ENCODE measurements at regions of chr2 and their contacts with region 1.

Region 1: DNA sequence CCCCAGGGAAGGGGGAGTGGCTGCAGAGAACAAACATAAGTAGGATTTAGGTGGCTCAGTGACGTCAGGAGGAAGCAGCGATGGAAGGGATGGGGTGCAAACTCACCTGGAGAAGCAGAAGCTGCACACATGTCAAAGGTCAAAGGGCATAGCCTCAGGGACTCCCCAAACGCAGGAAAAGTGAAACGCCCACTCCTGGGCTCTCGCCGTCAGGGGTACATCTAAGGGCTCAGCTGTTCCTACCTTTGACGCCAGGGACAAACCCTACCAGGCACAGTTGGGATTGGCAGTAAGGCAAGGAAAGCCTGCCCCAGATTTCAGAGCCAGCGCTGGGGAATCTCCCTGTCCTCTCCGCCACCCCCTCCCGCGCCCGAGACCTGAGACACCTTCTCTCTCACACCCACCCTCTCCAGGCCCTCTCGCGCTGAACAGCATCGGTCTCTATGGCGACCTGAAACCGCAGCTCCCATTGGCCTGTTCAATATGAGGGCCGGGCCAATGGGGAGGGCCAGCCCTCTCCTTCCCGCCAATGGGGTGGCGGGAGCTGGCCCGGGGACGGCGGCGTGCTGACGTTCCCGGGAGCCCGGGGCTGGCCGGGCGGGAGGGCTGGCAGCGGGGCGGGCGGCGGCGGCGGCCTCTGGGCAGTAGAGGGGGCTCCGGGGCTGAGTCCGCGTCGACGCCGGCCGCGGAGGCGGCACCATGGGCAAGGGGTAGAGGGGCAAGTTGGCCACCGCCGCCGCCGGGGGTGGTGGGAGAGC is at the starts of genes CCDC148 and PKP4:
- DNase-seq: peak; percentile 82 to 87
- H3K4me3 ChIP-seq: peak within 1 kb of the TSS; percentile 77 to 90 (median 80)
- H3K27ac ChIP-seq: peak within 1 kb of the TSS; percentile 81
- H3K4me1 ChIP-seq: peaks cover 0 to 6% (median 4%) of the 10 kb centered on the region in 4 experiments; a peak in 4 of 7 replicates
- H3K27me3 ChIP-seq: no peaks in the 10 kb centered on the region
- CTCF ChIP-seq: peak in 2 of 3 experiments; percentile 14 to 20; a peak in 3 of 4 replicates
- EP300 ChIP-seq: no peak
- POLR2A ChIP-seq: peak; percentile 60 to 67; a peak in 2 of 3 replicates
- RAD21 ChIP-seq: peak in 1 of 2 experiments; percentile 38; a peak in 1 of 4 replicates
- total RNA-seq, gene CCDC148: 1.3 and 1.5 TPM in 2 replicates
- total RNA-seq, gene PKP4: 83.6 and 88.0 TPM in 2 replicates

Region 2: GRCh38 chr2:158443612-158444011 is 12.9 kb before region 1 on chr2:
- CTCF ChIA-PET with region 1: interaction called, 3 read pairs
- POLR2A ChIA-PET with region 1: interaction called, 16 read pairs
- DNase-seq: no peak
- H3K4me3 ChIP-seq: no peak overlapping the region
- H3K27ac ChIP-seq: no peak overlapping the region
- H3K4me1 ChIP-seq: no peaks in the 10 kb centered on the region
- H3K27me3 ChIP-seq: no peaks in the 10 kb centered on the region
- CTCF ChIP-seq: no peak
- EP300 ChIP-seq: no peak
- POLR2A ChIP-seq: no peak
- RAD21 ChIP-seq: no peak

Region 3: DNA sequence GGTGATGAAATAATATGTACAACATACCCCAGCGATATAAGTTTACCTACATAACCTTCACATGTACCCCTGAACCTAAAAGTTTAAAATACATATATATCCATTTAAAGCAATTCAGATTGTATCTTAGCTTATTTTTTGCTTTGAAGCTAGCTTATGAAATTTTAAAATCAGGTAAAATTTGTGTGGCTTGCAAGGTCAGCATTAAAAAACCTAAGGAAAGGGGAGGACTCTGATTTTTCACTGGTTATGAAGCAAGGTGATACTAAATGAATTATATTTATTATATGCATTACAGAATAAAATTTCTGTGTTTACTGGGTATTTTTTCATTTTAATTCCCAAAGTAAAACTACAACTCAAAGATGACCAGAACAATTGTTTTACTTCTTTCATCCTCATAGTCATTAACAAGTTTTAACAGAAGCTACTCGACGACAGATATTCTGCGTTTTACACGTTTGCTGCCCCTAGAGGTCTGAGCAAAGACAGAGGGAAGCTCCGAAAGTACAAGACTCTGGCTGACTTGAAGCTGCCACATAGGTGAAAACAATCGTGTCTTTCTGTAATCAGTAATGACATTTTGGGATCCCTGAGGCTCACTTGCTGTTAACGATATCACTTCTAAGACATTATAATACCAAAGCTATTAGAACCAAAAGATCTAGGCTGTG is 17.4 kb after region 1 on chr2:
- CTCF ChIA-PET with region 1: interaction called, 58 read pairs
- POLR2A ChIA-PET with region 1: interaction called, 12 read pairs
- DNase-seq: no peak
- H3K4me3 ChIP-seq: no peak overlapping the region
- H3K27ac ChIP-seq: no peak overlapping the region
- H3K4me1 ChIP-seq: peaks cover 2 to 9% (median 6%) of the 10 kb centered on the region in 4 experiments; a peak in 3 of 7 replicates
- H3K27me3 ChIP-seq: no peaks in the 10 kb centered on the region
- CTCF ChIP-seq: peak in 2 of 3 experiments; percentile 38 to 73; a peak in 2 of 4 replicates
- EP300 ChIP-seq: no peak
- POLR2A ChIP-seq: no peak
- RAD21 ChIP-seq: peak; percentile 34 to 48

Region 4: GRCh38 chr2:158489366-158490112 is 33.1 kb after region 1 on chr2:
- CTCF ChIA-PET with region 1: interaction called, 10 read pairs
- POLR2A ChIA-PET with region 1: interaction called, 4 read pairs
- DNase-seq: no peak
- H3K4me3 ChIP-seq: peak overlapping the region in 1 of 4 experiments; percentile 20; a peak in 1 of 8 replicates
- H3K27ac ChIP-seq: no peak overlapping the region
- H3K4me1 ChIP-seq: peaks cover 0 to 27% (median 24%) of the 10 kb centered on the region in 4 experiments; a peak in 5 of 7 replicates
- H3K27me3 ChIP-seq: no peaks in the 10 kb centered on the region
- CTCF ChIP-seq: peak in 2 of 3 experiments; percentile 6 to 9; a peak in 2 of 4 replicates
- EP300 ChIP-seq: no peak
- POLR2A ChIP-seq: no peak
- RAD21 ChIP-seq: peak in 1 of 2 experiments; percentile 32; a peak in 2 of 4 replicates

Region 5: GRCh38 chr2:158692372-158693103 is 236.1 kb after region 1 on chr2:
- CTCF ChIA-PET with region 1: no interaction called
- POLR2A ChIA-PET with region 1: no interaction called
- DNase-seq: no peak
- H3K4me3 ChIP-seq: no peak overlapping the region
- H3K27ac ChIP-seq: no peak overlapping the region
- H3K4me1 ChIP-seq: no peaks in the 10 kb centered on the region; a peak in 2 of 7 replicates
- H3K27me3 ChIP-seq: no peaks in the 10 kb centered on the region
- CTCF ChIP-seq: no peak
- EP300 ChIP-seq: no peak
- POLR2A ChIP-seq: no peak
- RAD21 ChIP-seq: no peak